Astrocyte of the cerebellum (primary cell): ENCODE measurements at regions of chr21 and their contacts with region 1.

Region 1: GRCh38 chr21:29546071-29546470 is 247.3 kb downstream of the BACH1 start:
- DNase-seq: no peak
- H3K4me3 ChIP-seq: no peak overlapping the region
- CTCF ChIP-seq: no peak

Region 2: DNA sequence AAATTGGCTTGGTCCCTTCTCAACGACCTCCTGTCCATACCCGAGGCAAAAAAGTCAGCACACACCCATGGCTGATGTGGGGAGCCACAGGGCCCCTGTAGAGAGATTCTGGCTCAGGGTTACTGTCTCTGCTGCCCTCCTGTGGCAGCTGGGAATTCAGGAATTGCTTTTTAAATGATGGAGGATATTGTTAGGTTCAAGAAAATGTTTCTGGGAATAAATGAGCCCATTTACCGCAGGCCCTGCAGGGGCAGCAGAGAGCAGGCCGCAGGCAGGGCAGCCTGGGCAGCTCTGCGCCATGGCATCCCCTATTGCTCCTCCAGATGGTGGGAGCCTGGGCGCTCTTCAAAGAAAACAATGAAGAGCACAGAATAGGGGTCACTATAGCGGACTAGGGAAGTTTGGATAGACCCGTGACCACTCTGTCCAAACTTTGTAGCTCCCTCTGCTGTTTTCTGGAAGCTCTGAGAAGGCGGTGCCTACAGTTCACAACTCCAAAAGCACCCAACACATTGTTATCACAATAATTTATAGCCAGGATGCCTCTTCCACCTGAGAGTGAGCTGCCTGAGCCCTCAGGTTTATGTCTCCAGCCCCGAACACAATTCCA is 46.2 kb before region 1 on chr21:
- in situ Hi-C with region 1: no loop called
- DNase-seq: no peak
- H3K4me3 ChIP-seq: no peak overlapping the region
- CTCF ChIP-seq: peak; percentile 53

Region 3: DNA sequence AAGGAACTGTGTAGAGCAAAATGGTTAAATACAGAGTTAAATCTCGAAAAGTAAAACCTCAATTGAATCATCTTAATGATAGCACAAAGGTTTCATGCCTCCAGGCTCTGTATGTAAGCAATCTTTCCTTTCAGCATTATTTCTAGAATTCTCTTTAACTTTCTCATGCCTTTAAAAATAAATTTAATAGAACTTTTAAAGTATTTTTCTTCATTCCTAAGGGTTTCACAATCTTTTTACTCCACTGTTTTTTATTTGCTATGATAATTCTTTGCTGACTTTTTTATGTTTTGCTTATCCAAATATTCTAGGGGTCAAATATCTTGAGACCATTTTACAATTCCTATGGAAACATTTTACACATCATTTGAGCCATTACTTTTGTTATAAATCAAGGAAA is 40.6 kb after region 1 on chr21:
- in situ Hi-C with region 1: loop called (anchors 5 kb)
- DNase-seq: no peak
- H3K4me3 ChIP-seq: no peak overlapping the region
- CTCF ChIP-seq: no peak